ENCODE measurements at regions of chr18 and their contacts with region 1.

Region 1: GRCh38 chr18:35972197-35973052 is at the start of gene RMP24:
- DNase-seq: peak; percentile 88 to 91
- ATAC-seq: peak; percentile 97 to 98
- H3K4me3 ChIP-seq: peak within 1 kb of the TSS; percentile 79 to 93 (median 88)
- H3K27ac ChIP-seq: peak within 1 kb of the TSS; percentile 85 to 93 (median 92)
- H3K4me1 ChIP-seq: peaks cover 18 to 23% of the 10 kb centered on the region in 2 donors
- H3K27me3 ChIP-seq: no peaks in the 10 kb centered on the region
- CTCF ChIP-seq: no peak
- POLR2A ChIP-seq: peak; percentile 53 to 70

Region 2: GRCh38 chr18:35240664-35241447 is 731.6 kb before region 1 on chr18 and contains the start of gene ZNF397:
- in situ Hi-C with region 1: loop called in 2 of 4 experiments (anchors 25 kb)
- intact Hi-C with region 1: loop called (anchors 5 kb)
- DNase-seq: peak; percentile 96 to 97
- ATAC-seq: peak; percentile 99
- H3K4me3 ChIP-seq: peak within 1 kb of the TSS; percentile 79 to 95 (median 86)
- H3K27ac ChIP-seq: peak within 1 kb of the TSS; percentile 92 to 100 (median 96)
- H3K4me1 ChIP-seq: peaks cover 10 to 15% of the 10 kb centered on the region in 2 donors
- H3K27me3 ChIP-seq: no peaks in the 10 kb centered on the region
- CTCF ChIP-seq: peak in 1 of 5 experiments; percentile 16
- POLR2A ChIP-seq: peak; percentile 95 to 96
- total RNA-seq, gene ZNF397: 12.3 to 23.4 (median 14.7) TPM

Region 3: GRCh38 chr18:35386600-35387351 is 585.6 kb before region 1 on chr18:
- in situ Hi-C with region 1: loop called in 1 of 4 experiments (anchors 25 kb)
- intact Hi-C with region 1: no loop called
- DNase-seq: peak in 1 of 2 donors; percentile 26
- ATAC-seq: peak in 1 of 2 donors; percentile 70
- H3K4me3 ChIP-seq: no peak overlapping the region
- H3K27ac ChIP-seq: no peak overlapping the region
- H3K4me1 ChIP-seq: no peaks in the 10 kb centered on the region
- H3K27me3 ChIP-seq: no peaks in the 10 kb centered on the region
- CTCF ChIP-seq: peak; percentile 38 to 84 (median 55)
- POLR2A ChIP-seq: no peak

Region 4: DNA sequence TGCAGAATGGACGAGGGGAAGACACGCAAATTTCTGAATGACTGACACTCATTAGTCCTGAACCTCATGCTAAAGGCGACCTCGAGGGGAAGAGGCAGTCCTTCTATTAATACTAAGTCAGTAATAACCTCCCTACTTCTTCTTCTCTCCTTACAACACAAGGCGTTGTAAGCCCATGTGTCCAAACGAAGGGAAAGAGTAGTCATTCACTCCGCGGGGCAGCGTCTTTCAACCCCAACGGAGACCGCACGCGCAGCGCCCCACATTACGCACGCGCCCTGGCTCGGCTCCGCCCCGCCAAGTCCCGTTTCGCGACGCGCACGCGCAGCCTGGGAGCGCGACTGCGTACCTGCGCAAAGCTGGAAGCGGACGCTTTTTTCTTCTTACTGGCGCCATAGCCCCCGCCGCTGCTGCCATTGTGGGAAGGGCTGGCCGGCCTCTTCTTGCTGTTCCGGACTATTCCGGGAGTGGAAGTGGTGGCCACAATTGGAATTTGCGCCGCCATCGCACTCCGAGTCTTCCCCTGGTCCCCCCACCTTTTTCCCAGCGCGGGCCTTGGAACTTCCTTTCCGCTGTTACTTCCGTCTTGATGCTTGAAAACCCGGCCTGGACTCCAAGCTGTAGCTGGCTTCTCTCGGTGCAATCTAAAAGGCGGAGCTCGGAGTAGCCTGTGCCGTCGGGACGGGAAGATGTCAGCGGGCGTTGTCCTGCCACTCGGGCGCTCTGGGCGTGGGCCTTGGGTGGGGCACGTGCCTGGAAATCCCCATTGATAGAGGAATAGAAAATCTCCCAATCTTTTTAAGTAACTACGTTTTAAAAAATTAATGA is 474.8 kb before region 1 on chr18 and contains the start of gene INO80C:
- in situ Hi-C with region 1: no loop called
- intact Hi-C with region 1: loop called (anchors 5 kb)
- DNase-seq: peak; percentile 86 to 89
- ATAC-seq: peak; percentile 98
- H3K4me3 ChIP-seq: peak within 1 kb of the TSS; percentile 73 to 93 (median 82)
- H3K27ac ChIP-seq: peak within 1 kb of the TSS; percentile 93 to 99 (median 94)
- H3K4me1 ChIP-seq: peaks cover 13 to 26% of the 10 kb centered on the region in 2 donors
- H3K27me3 ChIP-seq: no peaks in the 10 kb centered on the region
- CTCF ChIP-seq: peak in 2 of 5 experiments; percentile 29 to 44
- POLR2A ChIP-seq: peak; percentile 79 to 82
- total RNA-seq, gene INO80C: 5.3 to 6.4 (median 5.5) TPM

Region 5: DNA sequence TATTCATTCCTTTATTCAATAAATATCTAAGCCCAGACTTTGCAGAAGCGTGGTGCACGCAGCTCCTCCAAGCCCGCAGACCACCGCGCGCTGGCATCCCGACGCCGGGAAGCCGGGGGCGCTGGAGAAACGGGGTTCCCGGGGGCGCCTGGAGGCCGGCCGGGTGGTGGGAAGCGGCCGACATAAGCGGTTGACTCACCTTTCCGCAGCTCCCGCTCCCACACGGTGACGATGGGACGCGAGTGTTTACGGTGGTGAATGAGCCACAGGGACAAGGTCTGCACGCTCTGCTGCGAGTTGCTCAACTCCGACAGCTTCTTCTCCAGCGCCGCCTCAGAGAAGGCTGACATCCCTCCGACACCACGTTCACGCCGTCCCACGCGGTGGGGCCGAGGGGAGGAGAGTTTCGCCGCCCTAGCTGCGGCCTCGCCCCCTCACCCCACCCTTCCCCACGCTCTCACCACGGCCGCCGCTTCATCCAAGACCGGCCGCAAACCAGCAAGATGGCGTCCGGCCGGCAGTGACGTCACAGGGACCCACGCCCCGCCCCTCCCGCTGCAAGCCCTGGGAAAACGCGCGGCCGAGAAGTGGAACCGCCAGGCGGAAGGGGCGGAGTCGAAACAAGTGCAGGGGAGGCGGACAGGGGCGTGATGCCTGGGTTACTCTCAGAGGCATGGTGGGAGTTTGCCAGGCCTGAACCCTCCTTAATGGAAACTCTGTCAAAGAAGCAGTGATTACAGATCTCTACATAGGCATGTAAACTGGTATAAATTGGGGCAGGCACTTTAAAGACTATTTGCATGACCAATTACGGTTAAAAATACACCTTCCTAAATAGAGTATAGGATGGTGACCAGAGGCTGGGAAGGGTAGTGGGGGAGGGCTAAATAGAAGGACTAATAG is 94.9 kb after region 1 on chr18 and contains the start of gene RPRD1A:
- in situ Hi-C with region 1: no loop called
- intact Hi-C with region 1: loop called (anchors 2 kb)
- DNase-seq: peak; percentile 89 to 93
- ATAC-seq: peak; percentile 97 to 99
- H3K4me3 ChIP-seq: peak within 1 kb of the TSS; percentile 73 to 93 (median 83)
- H3K27ac ChIP-seq: peak within 1 kb of the TSS; percentile 84 to 91 (median 88)
- H3K4me1 ChIP-seq: peaks cover 10 to 15% of the 10 kb centered on the region in 2 donors
- H3K27me3 ChIP-seq: no peaks in the 10 kb centered on the region
- CTCF ChIP-seq: peak in 1 of 5 experiments; percentile 9
- POLR2A ChIP-seq: peak; percentile 47 to 55
- total RNA-seq, gene RPRD1A: 59.6 to 63.8 (median 61.8) TPM

Measured in gastrocnemius medialis (tissue), 4 donors.